ENCODE measurements at regions of chr22 and their contacts with region 1.

Region 1: GRCh38 chr22:44180706-44181032 is at the start of gene PARVG:
- DNase-seq: peak; percentile 57
- ATAC-seq: peak; percentile 76
- H3K4me3 ChIP-seq: peak within 1 kb of the TSS; percentile 79
- H3K27ac ChIP-seq: peak within 1 kb of the TSS; percentile 91
- H3K4me1 ChIP-seq: peaks cover 13% of the 10 kb centered on the region
- H3K27me3 ChIP-seq: no peaks in the 10 kb centered on the region
- CTCF ChIP-seq: no peak
- EP300 ChIP-seq: no peak
- POLR2A ChIP-seq: no peak
- RAD21 ChIP-seq: no peak
- polyA plus RNA-seq, gene PARVG: 6.3 to 11.7 TPM

Region 2: GRCh38 chr22:44192098-44192810 is 11.6 kb after region 1 on chr22:
- CTCF ChIA-PET with region 1: interaction called, 4 read pairs
- POLR2A ChIA-PET with region 1: interaction called, 17 read pairs
- RAD21 ChIA-PET with region 1: interaction called, 9 read pairs
- SMC1A ChIA-PET with region 1: interaction called, 3 read pairs
- in situ Hi-C with region 1: no loop called
- intact Hi-C with region 1: no loop called
- DNase-seq: no peak
- ATAC-seq: peak; percentile 65
- H3K4me3 ChIP-seq: no peak overlapping the region
- H3K27ac ChIP-seq: no peak overlapping the region
- H3K4me1 ChIP-seq: peaks cover 43% of the 10 kb centered on the region
- H3K27me3 ChIP-seq: no peaks in the 10 kb centered on the region
- CTCF ChIP-seq: no peak
- EP300 ChIP-seq: no peak
- POLR2A ChIP-seq: no peak
- RAD21 ChIP-seq: no peak

Measured in GM12878 (cell line).